ENCODE measurements at regions of chr9 and their contacts with region 1.

Region 1: DNA sequence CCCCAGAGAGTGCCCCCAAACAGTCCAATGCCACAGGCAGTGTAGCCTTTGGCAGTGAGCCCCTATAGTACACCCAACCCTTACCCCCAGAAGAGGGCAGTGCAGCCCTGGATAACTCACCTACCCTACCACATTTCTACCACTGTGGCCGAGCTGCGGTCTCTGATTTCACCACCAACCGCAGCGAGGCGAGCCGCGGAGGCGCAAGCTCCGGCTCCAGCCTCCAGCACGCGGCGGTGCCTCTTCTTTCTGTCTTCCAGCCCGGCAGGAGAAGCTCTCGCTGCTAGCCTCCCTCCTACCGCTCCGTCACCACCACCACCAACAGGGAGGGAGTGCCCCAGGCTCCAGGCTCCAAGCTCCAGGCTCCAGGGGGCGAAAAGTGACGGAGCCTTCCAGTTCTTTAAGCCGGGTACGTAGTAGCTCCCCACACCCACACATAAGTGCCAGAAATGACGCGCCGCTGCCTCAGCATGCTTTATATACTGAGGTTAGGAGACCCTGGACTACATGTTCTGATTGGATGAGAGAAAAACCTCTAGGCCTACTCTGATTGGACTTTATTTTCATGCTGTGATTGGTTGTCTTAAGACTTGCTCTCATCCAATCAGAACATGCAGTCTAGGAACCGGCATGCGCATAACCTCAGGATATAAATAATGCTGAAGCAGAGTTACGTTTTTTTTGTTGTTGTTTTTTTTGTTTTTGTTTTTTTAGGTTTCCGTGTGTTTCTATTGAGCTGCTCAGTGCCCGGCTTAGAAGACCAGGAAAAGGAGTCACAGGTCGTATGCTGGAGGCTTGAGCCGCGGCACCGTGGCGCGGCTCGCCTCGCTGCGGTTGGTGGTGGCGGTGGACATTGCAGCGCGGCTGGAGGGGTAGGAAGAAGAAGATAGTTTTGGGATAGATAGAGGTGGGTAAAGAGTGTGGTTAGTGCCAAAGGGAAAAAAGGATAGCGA is at the start of gene PCAT7:
- DNase-seq: peak; percentile 78 to 87
- H3K4me3 ChIP-seq: peak within 1 kb of the TSS; percentile 67
- H3K27ac ChIP-seq: peak within 1 kb of the TSS; percentile 82
- H3K4me1 ChIP-seq: peaks cover 5% of the 10 kb centered on the region
- H3K27me3 ChIP-seq: no peaks in the 10 kb centered on the region
- CTCF ChIP-seq: peak; percentile 82
- total RNA-seq, gene PCAT7: 3.8 and 3.9 TPM in 2 replicates

Region 2: GRCh38 chr9:94443032-94443722 is 111.5 kb before region 1 on chr9:
- CTCF ChIA-PET with region 1: no interaction called
- POLR2A ChIA-PET with region 1: no interaction called
- intact Hi-C with region 1: no loop called
- DNase-seq: no peak
- H3K4me3 ChIP-seq: no peak overlapping the region
- H3K27ac ChIP-seq: no peak overlapping the region
- H3K4me1 ChIP-seq: no peaks in the 10 kb centered on the region
- H3K27me3 ChIP-seq: no peaks in the 10 kb centered on the region
- CTCF ChIP-seq: no peak

Region 3: DNA sequence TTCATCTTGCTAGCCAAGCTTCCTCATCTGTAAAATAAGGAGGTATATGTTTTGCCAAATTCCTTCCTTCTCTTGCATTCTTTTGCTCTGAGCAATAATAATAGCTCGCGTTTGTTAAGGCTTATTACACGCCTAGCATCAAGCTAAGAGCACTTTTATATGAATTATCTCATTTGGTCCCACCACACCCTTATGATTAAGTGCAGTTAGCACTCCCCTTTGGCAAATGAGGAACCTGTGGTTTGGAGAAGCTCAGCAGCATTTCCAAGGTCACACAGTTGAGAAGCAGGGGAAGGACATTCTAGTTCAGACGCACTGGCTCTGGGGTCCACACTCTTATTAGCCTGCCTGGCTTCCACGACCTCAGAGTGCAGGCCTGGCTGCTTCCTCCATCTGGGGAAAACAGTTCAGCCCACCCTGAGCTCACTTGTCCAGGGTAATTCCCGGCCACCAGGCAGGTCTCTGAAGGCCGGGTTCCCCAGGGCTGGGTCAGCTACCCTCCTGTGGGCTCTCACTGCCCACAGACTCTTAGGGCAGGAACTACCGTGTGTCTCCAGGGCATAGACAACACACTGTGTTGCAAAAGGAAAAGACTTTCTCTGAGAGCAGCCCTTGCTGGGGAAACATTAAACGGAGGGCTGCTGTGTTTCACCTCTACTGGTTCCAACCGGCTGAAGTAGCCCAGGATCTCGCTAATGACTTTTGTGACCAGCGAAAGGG is 94.5 kb after region 1 on chr9:
- CTCF ChIA-PET with region 1: interaction called, 12 read pairs
- POLR2A ChIA-PET with region 1: no interaction called
- intact Hi-C with region 1: no loop called
- DNase-seq: peak; percentile 68 to 100
- H3K4me3 ChIP-seq: peak overlapping the region; percentile 29; the same call in 1 of the 2 replicates
- H3K27ac ChIP-seq: peak overlapping the region; percentile 95
- H3K4me1 ChIP-seq: peaks cover 68% of the 10 kb centered on the region
- H3K27me3 ChIP-seq: no peaks in the 10 kb centered on the region
- CTCF ChIP-seq: no peak

Region 4: GRCh38 chr9:94681508-94681907 is 126.8 kb after region 1 on chr9:
- CTCF ChIA-PET with region 1: interaction called, 6 read pairs
- POLR2A ChIA-PET with region 1: no interaction called
- intact Hi-C with region 1: loop called (anchors 1 kb)
- DNase-seq: peak; percentile 51 to 59
- H3K4me3 ChIP-seq: no peak overlapping the region
- H3K27ac ChIP-seq: no peak overlapping the region
- H3K4me1 ChIP-seq: 0 out of 2 replicates have a peak, but pooled peaks cover 6% of the 10 kb centered on the region
- H3K27me3 ChIP-seq: no peaks in the 10 kb centered on the region
- CTCF ChIP-seq: peak; percentile 74

Region 5: GRCh38 chr9:94922098-94922607 is 367.4 kb after region 1 on chr9:
- CTCF ChIA-PET with region 1: no interaction called
- POLR2A ChIA-PET with region 1: no interaction called
- intact Hi-C with region 1: loop called (anchors 5 kb)
- DNase-seq: peak; percentile 79 to 99
- H3K4me3 ChIP-seq: peak overlapping the region; percentile 46
- H3K27ac ChIP-seq: peak overlapping the region; percentile 97
- H3K4me1 ChIP-seq: peaks cover 92% of the 10 kb centered on the region
- H3K27me3 ChIP-seq: no peaks in the 10 kb centered on the region
- CTCF ChIP-seq: no peak

Region 6: GRCh38 chr9:95018099-95018936 is 463.6 kb after region 1 on chr9:
- CTCF ChIA-PET with region 1: no interaction called
- POLR2A ChIA-PET with region 1: interaction called, 14 read pairs
- intact Hi-C with region 1: no loop called
- DNase-seq: peak in 1 of 2 experiments; percentile 77
- H3K4me3 ChIP-seq: no peak overlapping the region
- H3K27ac ChIP-seq: peak overlapping the region; percentile 38
- H3K4me1 ChIP-seq: peaks cover 12% of the 10 kb centered on the region; the same call in 1 of the 2 replicates
- H3K27me3 ChIP-seq: no peaks in the 10 kb centered on the region
- CTCF ChIP-seq: no peak

Region 7: GRCh38 chr9:96217754-96218693 is 1663.3 kb after region 1 on chr9:
- CTCF ChIA-PET with region 1: no interaction called
- POLR2A ChIA-PET with region 1: no interaction called
- intact Hi-C with region 1: loop called (anchors 5 kb)
- DNase-seq: peak; percentile 39 to 78
- H3K4me3 ChIP-seq: no peak overlapping the region
- H3K27ac ChIP-seq: no peak overlapping the region
- H3K4me1 ChIP-seq: no peaks in the 10 kb centered on the region
- H3K27me3 ChIP-seq: peaks cover 24% of the 10 kb centered on the region
- CTCF ChIP-seq: peak; percentile 85

Measured in PC-9 (cell line).